ENCODE measurements at regions of chr10 and their contacts with region 1.

Region 1: GRCh38 chr10:73379064-73379748 is 20.5 kb upstream of the CFAP70 start:
- DNase-seq: no peak
- H3K4me3 Mint-ChIP-seq: no peak overlapping the region
- H3K27ac Mint-ChIP-seq: no peak overlapping the region
- H3K4me1 Mint-ChIP-seq: no peaks in the 10 kb centered on the region
- H3K27me3 Mint-ChIP-seq: no peaks in the 10 kb centered on the region
- CTCF ChIP-seq: no peak

Region 2: DNA sequence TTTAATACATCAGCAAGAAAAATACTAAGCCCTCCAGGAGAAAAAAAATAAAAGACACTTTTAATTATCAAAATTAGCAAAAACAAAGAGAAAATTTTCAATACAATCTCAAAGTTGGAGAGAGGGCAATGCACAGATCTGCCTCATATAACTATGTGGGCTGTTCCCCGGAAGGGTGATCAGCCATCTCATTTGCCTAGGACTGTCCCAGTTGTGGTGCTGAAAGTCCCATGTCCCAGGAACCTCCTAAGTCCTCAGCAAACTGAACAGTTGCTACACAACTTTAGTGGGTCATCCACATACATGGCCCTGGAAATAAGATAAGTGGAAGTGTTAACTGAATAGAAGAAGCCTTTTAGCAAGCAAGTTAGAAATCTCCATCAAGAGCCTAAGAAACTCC is 34.9 kb before region 1 on chr10:
- CTCF ChIA-PET with region 1: no interaction called
- POLR2A ChIA-PET with region 1: no interaction called
- intact Hi-C with region 1: loop called (anchors 1 kb)
- DNase-seq: no peak
- H3K4me3 Mint-ChIP-seq: no peak overlapping the region
- H3K27ac Mint-ChIP-seq: no peak overlapping the region
- H3K4me1 Mint-ChIP-seq: no peaks in the 10 kb centered on the region
- H3K27me3 Mint-ChIP-seq: no peaks in the 10 kb centered on the region
- CTCF ChIP-seq: no peak

Region 3: DNA sequence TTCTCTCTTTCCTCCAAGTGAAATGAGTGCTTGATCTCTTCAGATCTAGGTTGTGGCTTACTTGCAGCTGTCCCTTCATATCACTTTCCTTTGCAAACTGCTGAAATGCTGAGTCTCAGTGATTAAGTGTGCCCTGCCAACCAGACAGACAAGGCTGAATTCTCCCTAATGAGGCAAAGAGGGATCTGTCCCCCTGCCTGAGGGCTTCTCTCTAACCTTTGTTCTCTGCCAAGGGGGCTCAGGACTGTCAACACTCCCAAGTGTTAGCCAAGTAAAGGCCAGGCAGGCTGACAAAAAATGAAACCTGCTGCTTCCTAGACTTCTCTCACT is 54.3 kb after region 1 on chr10 and contains the start of gene MSS51:
- CTCF ChIA-PET with region 1: no interaction called
- POLR2A ChIA-PET with region 1: no interaction called
- intact Hi-C with region 1: no loop called
- DNase-seq: no peak
- H3K4me3 Mint-ChIP-seq: no peak within 1 kb of the TSS
- H3K27ac Mint-ChIP-seq: no peak within 1 kb of the TSS
- H3K4me1 Mint-ChIP-seq: peaks cover 1% of the 10 kb centered on the region
- H3K27me3 Mint-ChIP-seq: no peaks in the 10 kb centered on the region
- CTCF ChIP-seq: no peak
- total RNA-seq, gene MSS51: 1.8 and 2.4 TPM in 2 replicates

Region 4: GRCh38 chr10:73517271-73517877 is 138.2 kb after region 1 on chr10:
- CTCF ChIA-PET with region 1: no interaction called
- POLR2A ChIA-PET with region 1: no interaction called
- intact Hi-C with region 1: no loop called
- DNase-seq: peak; percentile 14
- H3K4me3 Mint-ChIP-seq: no peak overlapping the region
- H3K27ac Mint-ChIP-seq: no peak overlapping the region
- H3K4me1 Mint-ChIP-seq: no peaks in the 10 kb centered on the region
- H3K27me3 Mint-ChIP-seq: no peaks in the 10 kb centered on the region
- CTCF ChIP-seq: no peak